AG04450 (cell line): ENCODE measurements at regions of chr2 and their contacts with region 1.

Region 1: GRCh38 chr2:169877398-169877797 is 50.1 kb downstream of the UBR3 start:
- DNase-seq: no peak
- H3K4me3 ChIP-seq: no peak overlapping the region
- H3K27ac ChIP-seq: no peak overlapping the region
- H3K27me3 ChIP-seq: no peaks in the 10 kb centered on the region
- CTCF ChIP-seq: peak; percentile 54

Region 2: GRCh38 chr2:169619946-169620345 is 257.5 kb before region 1 on chr2:
- CTCF ChIA-PET with region 1: no interaction called
- POLR2A ChIA-PET with region 1: no interaction called
- DNase-seq: no peak
- H3K4me3 ChIP-seq: no peak overlapping the region
- H3K27ac ChIP-seq: no peak overlapping the region
- H3K27me3 ChIP-seq: no peaks in the 10 kb centered on the region
- CTCF ChIP-seq: no peak

Region 3: DNA sequence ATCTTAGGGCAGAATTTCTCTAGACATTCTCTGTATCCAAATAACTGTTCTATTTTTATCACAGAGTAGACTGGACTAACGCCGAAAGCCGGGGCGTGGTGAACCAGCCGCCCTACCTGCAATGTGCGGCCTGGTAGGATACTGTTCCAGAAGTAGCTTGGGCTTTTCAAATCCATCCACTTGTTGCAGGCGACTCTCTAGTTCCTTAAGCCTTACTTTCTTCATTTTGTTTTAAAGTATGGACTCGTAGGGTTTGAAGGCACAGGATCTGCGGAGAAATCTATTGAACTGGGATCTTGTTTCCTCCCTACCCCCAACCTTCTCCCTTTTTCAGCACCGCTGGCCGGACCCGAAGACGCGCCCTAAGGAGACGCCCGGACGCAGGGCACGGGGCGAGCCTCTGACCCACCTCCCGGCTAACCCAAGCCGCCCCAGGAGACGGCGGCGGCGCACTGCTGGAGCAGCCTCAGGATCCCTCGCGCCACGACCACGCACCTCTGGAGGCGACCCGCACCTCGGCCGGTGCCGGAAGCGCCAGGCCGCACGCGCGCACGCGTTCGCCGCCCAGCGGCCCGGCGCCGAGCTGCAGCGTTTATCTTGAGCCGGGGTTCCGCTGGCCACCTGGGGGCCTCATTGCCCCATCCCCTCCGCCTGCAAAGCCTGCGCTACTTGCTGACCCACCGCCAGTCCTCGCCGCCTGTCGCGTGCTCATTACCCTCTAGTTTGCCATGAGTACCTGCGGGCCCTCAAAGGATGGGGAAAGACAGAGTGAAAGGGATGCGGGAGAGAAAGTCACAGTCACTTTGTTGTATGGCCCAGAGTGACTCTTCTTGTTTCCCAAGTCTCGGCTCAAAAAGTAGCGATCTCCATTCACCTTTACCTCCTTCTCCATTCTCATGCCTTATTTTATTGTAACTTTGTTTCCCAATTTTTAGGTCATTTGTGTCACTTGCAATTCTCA is 52.7 kb before region 1 on chr2 and contains the start of gene METTL5:
- CTCF ChIA-PET with region 1: interaction called, 27 read pairs
- POLR2A ChIA-PET with region 1: interaction called, 6 read pairs
- DNase-seq: peak; percentile 34
- H3K4me3 ChIP-seq: peak within 1 kb of the TSS; percentile 82
- H3K27ac ChIP-seq: peak within 1 kb of the TSS; percentile 31
- H3K27me3 ChIP-seq: no peaks in the 10 kb centered on the region
- CTCF ChIP-seq: peak; percentile 79
- polyA plus RNA-seq, gene METTL5: 34.3 and 45.0 TPM in 2 replicates